CD4-positive, alpha-beta T cell (primary cell): ENCODE measurements at regions of chr6 and their contacts with region 1.

Region 1: DNA sequence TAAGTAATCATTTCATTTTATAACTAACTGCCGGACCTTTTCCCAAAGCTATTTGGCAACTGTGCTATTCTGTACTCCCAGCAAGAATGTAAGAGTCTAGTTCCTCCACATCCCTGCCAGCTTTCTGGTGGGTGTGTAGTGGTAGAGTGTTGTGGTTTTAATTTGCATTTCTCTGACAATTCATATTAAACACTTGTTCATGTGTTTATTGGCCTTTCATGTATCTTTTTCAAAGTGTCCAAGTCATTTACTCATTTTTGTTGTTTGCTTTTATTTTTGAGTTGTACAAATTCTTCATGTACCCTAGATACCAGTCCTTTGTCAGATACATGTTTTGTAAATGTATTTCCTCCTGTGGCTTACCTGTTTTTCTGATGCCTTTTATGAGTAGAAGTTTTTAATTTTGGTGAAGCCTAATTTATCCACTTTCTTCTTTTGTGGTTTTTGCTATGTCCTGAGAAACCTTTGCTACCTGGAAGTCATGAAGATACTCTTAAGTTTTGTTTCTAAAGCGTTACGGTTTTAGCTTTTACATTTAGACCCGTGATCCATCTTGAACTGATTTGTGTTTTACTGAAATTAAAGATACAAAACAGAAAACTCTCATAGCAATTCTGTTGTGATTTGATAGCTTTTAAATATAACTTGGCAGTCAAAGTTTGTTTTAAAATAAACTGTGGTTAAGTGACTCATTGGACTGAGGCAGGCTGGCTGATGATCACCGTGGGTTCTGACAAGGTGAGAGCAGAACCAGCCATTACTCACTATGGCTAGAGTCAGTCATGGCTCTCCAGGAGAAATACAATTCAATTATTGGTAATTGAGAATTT is 8.0 kb downstream of the MYLIP start:
- DNase-seq: peak in 13 of 14 experiments; percentile 15 to 71 (median 38)
- ATAC-seq: peak; percentile 53
- H3K4me3 ChIP-seq: peak overlapping the region; percentile 9
- H3K4me3 Mint-ChIP-seq: peak overlapping the region; percentile 64
- H3K27ac ChIP-seq: no peak overlapping the region
- H3K27ac Mint-ChIP-seq: peak overlapping the region; percentile 71
- H3K4me1 ChIP-seq: peaks cover 40% of the 10 kb centered on the region
- H3K4me1 Mint-ChIP-seq: peaks cover 97% of the 10 kb centered on the region
- H3K27me3 ChIP-seq: no peaks in the 10 kb centered on the region
- H3K27me3 Mint-ChIP-seq: no peaks in the 10 kb centered on the region
- CTCF ChIP-seq: no peak

Region 2: GRCh38 chr6:15936503-15936902 is 200.3 kb before region 1 on chr6:
- CTCF ChIA-PET with region 1: no interaction called
- POLR2A ChIA-PET with region 1: no interaction called
- intact Hi-C with region 1: no loop called
- DNase-seq: peak in 3 of 14 experiments; percentile 8 to 13 (median 11)
- ATAC-seq: no peak
- H3K4me3 ChIP-seq: no peak overlapping the region
- H3K4me3 Mint-ChIP-seq: no peak overlapping the region
- H3K27ac ChIP-seq: no peak overlapping the region
- H3K27ac Mint-ChIP-seq: no peak overlapping the region
- H3K4me1 ChIP-seq: no peaks in the 10 kb centered on the region
- H3K4me1 Mint-ChIP-seq: no peaks in the 10 kb centered on the region
- H3K27me3 ChIP-seq: peaks cover 0 to 3% of the 10 kb centered on the region in 2 experiments
- H3K27me3 Mint-ChIP-seq: no peaks in the 10 kb centered on the region
- CTCF ChIP-seq: no peak

Region 3: DNA sequence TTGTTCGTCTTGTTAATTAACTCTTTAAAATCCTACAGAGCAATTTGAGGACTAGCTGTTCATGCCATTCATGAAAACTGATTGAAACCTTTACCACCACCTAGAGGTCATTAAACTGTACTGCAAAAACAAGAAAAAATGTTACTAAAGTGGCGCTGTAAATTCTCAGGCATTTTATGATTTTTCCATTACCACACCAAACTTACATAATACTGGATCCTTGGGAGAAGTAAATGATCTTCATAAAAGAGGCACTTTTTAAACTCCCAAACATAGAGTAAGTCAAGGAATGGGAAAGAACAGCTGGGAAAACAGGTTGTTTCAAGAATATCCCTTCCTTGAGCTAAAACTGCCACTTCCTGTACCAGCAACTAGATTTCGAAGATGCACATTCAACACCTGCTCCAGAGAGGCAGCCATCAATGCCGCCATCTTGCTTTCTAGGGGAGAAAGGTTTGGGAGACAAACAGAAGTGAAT is 46.4 kb after region 1 on chr6:
- CTCF ChIA-PET with region 1: interaction called, 5 read pairs
- POLR2A ChIA-PET with region 1: interaction called, 68 read pairs
- intact Hi-C with region 1: loop called in 1 of 2 experiments (anchors 2 kb)
- DNase-seq: peak in 3 of 14 experiments; percentile 48 to 63 (median 60)
- ATAC-seq: peak; percentile 24
- H3K4me3 ChIP-seq: no peak overlapping the region
- H3K4me3 Mint-ChIP-seq: no peak overlapping the region
- H3K27ac ChIP-seq: no peak overlapping the region
- H3K27ac Mint-ChIP-seq: peak overlapping the region; percentile 37
- H3K4me1 ChIP-seq: peaks cover 30% of the 10 kb centered on the region
- H3K4me1 Mint-ChIP-seq: peaks cover 42% of the 10 kb centered on the region
- H3K27me3 ChIP-seq: no peaks in the 10 kb centered on the region
- H3K27me3 Mint-ChIP-seq: no peaks in the 10 kb centered on the region
- CTCF ChIP-seq: peak; percentile 71

Region 4: GRCh38 chr6:16319813-16320532 is 183.1 kb after region 1 on chr6:
- CTCF ChIA-PET with region 1: no interaction called
- POLR2A ChIA-PET with region 1: no interaction called
- intact Hi-C with region 1: loop called in 1 of 2 experiments (anchors 2 kb)
- DNase-seq: peak; percentile 41 to 89 (median 62)
- ATAC-seq: peak; percentile 55
- H3K4me3 ChIP-seq: peak overlapping the region; percentile 40
- H3K4me3 Mint-ChIP-seq: peak overlapping the region; percentile 70
- H3K27ac ChIP-seq: peak overlapping the region; percentile 63 to 93
- H3K27ac Mint-ChIP-seq: peak overlapping the region; percentile 94
- H3K4me1 ChIP-seq: peaks cover 82% of the 10 kb centered on the region
- H3K4me1 Mint-ChIP-seq: peaks cover 78% of the 10 kb centered on the region
- H3K27me3 ChIP-seq: no peaks in the 10 kb centered on the region
- H3K27me3 Mint-ChIP-seq: no peaks in the 10 kb centered on the region
- CTCF ChIP-seq: no peak